CD4-positive, alpha-beta memory T cell (primary cell): ENCODE measurements at regions of chr17 and their contacts with region 1.

Region 1: DNA sequence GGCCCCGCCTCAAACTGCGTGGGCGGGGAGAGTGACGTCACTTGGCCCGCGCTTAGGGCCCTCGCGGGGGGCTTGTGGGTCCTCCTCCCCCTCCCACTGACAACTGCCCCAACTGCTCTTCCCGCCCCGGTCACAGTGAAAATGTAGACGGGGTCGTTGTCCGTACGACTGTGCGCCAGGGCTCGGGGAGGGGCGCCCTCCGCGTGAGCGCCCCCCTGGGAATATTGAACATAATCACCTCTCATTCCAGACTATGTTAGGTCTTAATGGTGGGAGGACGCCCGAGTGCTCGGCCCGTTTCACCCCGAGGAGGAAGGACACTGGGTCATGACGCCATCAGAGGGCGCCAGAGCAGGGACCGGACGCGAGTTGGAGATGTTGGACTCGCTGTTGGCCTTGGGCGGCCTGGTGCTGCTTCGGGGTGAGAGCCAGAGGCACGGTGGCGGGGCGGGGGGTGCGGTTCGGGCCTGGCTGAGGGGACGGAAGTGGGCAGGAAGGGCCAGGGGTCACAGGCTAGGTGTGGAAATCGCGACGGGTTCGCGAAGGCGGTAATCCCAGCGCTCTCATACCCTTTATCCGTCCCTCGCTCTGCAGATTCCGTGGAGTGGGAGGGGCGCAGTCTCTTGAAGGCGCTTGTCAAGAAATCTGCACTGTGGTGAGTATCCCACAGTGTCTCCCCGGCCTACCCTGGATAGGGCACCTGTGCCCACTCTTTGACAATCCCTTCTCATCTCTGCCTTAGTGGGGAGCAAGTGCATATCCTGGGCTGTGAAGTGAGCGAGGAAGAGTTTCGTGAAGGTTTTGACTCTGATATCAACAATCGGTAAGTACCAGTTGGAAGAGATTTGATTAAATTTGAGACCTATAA is at the start of gene ELP5:
- DNase-seq: peak in 4 of 5 donors; percentile 86 to 92 (median 88)
- H3K4me3 ChIP-seq: peak within 1 kb of the TSS; percentile 71 to 92
- H3K4me3 Mint-ChIP-seq: peak within 1 kb of the TSS; percentile 91 to 97 (median 95)
- H3K27ac ChIP-seq: peak within 1 kb of the TSS; percentile 98
- H3K27ac Mint-ChIP-seq: peak within 1 kb of the TSS; percentile 98 to 100 (median 99)
- H3K4me1 ChIP-seq: peaks cover 37% of the 10 kb centered on the region
- H3K4me1 Mint-ChIP-seq: peaks cover 25 to 49% (median 38%) of the 10 kb centered on the region in 4 donors
- H3K27me3 ChIP-seq: no peaks in the 10 kb centered on the region
- H3K27me3 Mint-ChIP-seq: no peaks in the 10 kb centered on the region
- total RNA-seq, gene ELP5: 29.8 to 30.9 TPM

Region 2: DNA sequence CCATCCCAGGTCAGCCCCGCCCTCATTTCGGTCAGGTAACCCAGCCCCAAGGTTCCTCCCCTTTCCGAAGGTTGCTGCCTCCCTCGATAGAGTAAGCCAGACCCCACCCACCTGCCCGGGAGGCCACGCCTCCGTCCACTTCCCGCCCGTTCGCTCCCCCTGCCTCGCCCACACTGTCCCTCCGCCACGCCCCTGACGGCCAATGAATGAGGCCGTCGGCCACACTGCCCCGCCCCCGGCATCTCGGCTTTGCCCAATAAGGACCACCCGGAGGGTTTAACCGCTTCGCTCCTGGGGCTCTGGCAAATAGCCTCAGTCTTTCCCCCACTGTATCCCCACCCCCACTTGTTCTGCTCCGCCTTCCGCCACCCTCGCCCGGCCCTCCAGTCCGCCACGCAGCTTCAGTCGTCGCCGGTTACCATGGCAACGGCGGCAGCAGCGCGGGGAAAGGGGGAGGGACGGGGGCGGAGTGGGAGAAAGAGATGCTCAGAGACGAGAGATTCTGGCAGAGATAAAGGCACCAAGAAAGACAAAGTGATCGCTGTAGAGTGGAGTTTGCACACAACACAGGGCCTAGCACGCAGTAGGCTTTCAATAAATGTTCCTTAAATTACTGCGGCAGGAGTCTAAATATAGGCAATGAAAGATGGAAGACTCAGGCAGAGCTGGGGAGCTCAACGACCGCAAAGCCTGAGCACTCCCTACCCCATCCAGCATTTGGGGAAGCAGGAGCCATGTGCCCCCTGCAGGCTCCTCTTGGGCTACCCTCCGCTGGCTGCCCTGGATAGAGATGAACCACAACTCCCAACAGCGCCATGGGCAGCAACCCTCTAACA is 37.9 kb before region 1 on chr17:
- CTCF ChIA-PET with region 1: interaction called, 4 read pairs
- POLR2A ChIA-PET with region 1: interaction called, 9 read pairs
- intact Hi-C with region 1: loop called (anchors 1 kb)
- DNase-seq: peak; percentile 97 to 99 (median 98)
- H3K4me3 ChIP-seq: peak overlapping the region; percentile 68 to 73
- H3K4me3 Mint-ChIP-seq: peak overlapping the region; percentile 90 to 98 (median 93)
- H3K27ac ChIP-seq: peak overlapping the region; percentile 96
- H3K27ac Mint-ChIP-seq: peak overlapping the region; percentile 98 to 100 (median 100)
- H3K4me1 ChIP-seq: peaks cover 54% of the 10 kb centered on the region
- H3K4me1 Mint-ChIP-seq: peaks cover 26 to 67% (median 43%) of the 10 kb centered on the region in 4 donors
- H3K27me3 ChIP-seq: no peaks in the 10 kb centered on the region
- H3K27me3 Mint-ChIP-seq: peaks cover 0 to 13% of the 10 kb centered on the region in 2 donors

Region 3: DNA sequence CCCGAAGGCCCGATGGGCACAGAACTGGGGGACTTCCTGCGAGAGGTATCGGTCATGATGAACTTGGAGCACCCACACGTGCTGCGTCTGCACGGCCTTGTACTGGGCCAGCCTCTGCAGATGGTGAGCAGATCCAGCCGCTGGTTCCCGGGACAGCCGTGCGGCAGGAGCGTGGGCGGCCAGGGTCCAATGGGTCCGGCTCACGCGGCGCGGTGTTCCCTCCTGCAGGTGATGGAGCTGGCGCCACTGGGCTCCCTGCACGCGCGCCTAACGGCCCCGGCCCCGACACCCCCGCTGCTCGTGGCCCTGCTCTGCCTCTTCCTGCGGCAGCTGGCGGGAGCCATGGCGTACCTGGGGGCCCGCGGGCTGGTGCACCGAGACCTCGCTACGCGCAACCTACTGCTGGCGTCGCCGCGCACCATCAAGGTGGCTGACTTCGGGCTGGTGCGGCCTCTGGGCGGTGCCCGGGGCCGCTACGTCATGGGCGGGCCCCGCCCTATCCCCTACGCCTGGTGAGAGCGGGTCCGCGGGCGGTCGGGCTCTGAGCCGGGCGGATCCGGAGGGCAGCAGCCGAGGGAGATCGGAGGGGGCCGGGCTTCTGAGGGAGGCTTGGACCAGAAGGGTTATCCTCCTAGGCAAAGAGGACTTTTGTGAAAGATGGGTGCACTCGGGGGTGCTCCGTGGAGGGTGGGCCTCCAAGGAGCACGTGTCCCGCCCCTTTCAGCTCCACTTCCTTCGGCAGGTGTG is 131.5 kb after region 1 on chr17:
- CTCF ChIA-PET with region 1: no interaction called
- POLR2A ChIA-PET with region 1: no interaction called
- intact Hi-C with region 1: no loop called
- DNase-seq: peak; percentile 82 to 87 (median 84)
- H3K4me3 ChIP-seq: peak overlapping the region; percentile 42 to 86
- H3K4me3 Mint-ChIP-seq: peak overlapping the region; percentile 80 to 87 (median 82)
- H3K27ac ChIP-seq: peak overlapping the region; percentile 72
- H3K27ac Mint-ChIP-seq: peak overlapping the region; percentile 88 to 97 (median 94)
- H3K4me1 ChIP-seq: peaks cover 16% of the 10 kb centered on the region
- H3K4me1 Mint-ChIP-seq: peaks cover 8 to 28% (median 13%) of the 10 kb centered on the region in 4 donors
- H3K27me3 ChIP-seq: peaks cover 9% of the 10 kb centered on the region
- H3K27me3 Mint-ChIP-seq: peaks cover 28 to 32% of the 10 kb centered on the region in 2 donors

Region 4: GRCh38 chr17:7627250-7628121 is 375.1 kb after region 1 on chr17 and contains the start of gene SAT2:
- CTCF ChIA-PET with region 1: no interaction called
- POLR2A ChIA-PET with region 1: no interaction called
- intact Hi-C with region 1: no loop called
- DNase-seq: peak; percentile 73 to 88 (median 75)
- H3K4me3 ChIP-seq: peak within 1 kb of the TSS; percentile 76 to 82
- H3K4me3 Mint-ChIP-seq: peak within 1 kb of the TSS; percentile 91 to 95 (median 93)
- H3K27ac ChIP-seq: peak within 1 kb of the TSS; percentile 82
- H3K27ac Mint-ChIP-seq: peak within 1 kb of the TSS; percentile 75 to 96 (median 91)
- H3K4me1 ChIP-seq: peaks cover 13% of the 10 kb centered on the region
- H3K4me1 Mint-ChIP-seq: peaks cover 4 to 20% (median 14%) of the 10 kb centered on the region in 4 donors
- H3K27me3 ChIP-seq: no peaks in the 10 kb centered on the region
- H3K27me3 Mint-ChIP-seq: no peaks in the 10 kb centered on the region
- total RNA-seq, gene SAT2: 65.8 to 76.9 TPM